ENCODE measurements at regions of chr12 and their contacts with region 1.

Region 1: DNA sequence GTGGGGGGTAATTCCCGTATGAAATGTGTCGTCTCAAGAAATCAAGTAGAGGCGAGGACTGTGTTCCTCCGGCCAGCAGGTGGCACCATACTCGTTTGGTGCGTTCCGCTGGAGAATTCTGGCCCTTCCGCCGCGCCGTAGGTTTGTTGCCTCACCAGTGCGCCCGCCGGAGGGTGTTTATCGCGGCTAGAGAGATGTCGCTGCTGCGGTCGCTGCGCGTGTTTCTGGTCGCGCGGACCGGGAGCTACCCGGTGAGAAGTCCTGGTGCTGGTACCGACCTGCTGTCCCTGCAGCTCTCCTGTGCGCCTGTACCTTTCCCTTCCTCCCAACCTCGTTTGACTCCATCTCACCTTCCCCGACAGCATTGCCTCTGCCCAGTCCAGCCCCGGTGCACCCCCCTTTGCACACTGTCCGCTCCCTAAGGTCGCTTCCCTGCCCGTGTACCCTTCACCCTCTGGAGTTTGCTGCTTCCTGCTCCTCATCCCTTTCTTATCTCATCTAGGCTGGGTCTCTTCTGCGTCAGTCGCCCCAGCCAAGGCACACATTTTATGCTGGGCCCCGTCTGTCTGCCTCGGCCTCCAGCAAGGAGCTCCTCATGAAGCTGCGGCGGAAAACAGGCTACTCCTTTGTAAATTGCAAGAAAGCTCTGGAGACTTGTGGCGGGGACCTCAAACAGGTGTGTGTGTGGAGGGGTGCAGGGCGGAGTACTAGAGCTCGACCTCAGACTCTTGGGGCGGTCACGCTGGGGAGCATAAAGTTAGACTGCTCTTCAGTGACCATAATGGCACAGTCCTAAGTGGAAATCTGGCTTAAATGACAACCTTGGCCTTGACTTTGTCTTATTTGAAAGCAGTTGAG is at the start of gene TSFM:
- DNase-seq: peak; percentile 90
- CTCF ChIP-seq: peak; percentile 94

Region 2: GRCh38 chr12:57700317-57700716 is 82.5 kb before region 1 on chr12:
- CTCF ChIA-PET with region 1: no interaction called
- POLR2A ChIA-PET with region 1: no interaction called
- DNase-seq: no peak
- CTCF ChIP-seq: no peak

Region 3: DNA sequence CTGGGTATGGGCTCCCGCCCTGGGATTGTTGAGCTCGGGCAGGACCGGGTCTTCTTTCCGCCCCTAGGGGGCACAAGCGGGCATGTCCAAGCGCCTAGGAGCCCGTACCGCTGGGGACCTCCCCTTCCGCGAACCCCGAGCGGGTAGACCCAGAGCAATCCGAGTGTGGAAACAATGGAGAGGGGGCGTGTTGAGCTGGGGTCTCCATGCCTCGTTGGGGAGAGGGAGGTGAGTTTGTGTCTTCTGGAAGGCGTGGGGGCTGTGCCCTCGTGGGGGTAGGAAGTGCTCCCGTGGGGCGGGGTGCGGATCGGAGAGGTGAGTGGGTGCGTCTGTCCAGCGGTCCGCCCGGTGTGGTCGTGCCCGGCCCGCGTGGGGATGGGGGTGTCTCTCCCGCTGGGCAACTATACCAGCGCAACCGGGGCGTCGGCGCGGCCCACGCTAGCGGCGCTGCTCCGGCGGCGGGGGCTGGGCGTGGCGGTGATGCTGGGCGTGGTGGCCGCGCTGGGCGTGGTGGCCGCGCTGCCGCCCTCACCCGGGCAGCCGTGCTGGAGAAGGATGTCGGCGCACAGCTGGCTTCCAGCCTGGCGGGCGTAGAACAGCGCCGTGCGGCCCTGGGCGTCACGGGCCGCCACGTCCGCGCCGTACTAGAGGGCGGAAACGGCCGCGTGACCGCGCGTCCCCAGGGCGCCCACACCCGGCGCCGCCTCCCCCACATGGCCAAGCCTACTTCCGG is 56.5 kb before region 1 on chr12:
- CTCF ChIA-PET with region 1: no interaction called
- POLR2A ChIA-PET with region 1: no interaction called
- DNase-seq: peak; percentile 16
- CTCF ChIP-seq: peak; percentile 39

Region 4: DNA sequence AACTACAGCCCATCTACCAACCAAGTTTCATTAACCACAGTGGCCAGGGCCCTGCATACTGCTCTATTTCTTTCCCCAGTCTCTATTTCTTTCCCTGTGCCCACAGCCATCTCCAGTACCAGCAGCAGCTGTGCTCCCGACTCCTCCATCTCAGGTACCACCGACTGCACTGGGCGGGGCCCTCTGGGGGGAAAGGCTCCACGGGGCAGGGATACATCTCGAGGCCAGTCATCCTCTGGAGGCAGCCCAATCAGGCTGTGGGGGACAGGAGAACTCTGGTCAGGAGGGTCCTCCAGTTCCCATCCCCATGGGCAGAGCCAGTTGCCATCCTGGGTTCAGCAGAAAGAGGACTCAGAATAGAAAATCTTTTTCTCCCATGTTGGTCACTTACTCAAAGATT is 33.8 kb before region 1 on chr12:
- CTCF ChIA-PET with region 1: no interaction called
- POLR2A ChIA-PET with region 1: no interaction called
- DNase-seq: no peak
- CTCF ChIP-seq: no peak

Region 5: DNA sequence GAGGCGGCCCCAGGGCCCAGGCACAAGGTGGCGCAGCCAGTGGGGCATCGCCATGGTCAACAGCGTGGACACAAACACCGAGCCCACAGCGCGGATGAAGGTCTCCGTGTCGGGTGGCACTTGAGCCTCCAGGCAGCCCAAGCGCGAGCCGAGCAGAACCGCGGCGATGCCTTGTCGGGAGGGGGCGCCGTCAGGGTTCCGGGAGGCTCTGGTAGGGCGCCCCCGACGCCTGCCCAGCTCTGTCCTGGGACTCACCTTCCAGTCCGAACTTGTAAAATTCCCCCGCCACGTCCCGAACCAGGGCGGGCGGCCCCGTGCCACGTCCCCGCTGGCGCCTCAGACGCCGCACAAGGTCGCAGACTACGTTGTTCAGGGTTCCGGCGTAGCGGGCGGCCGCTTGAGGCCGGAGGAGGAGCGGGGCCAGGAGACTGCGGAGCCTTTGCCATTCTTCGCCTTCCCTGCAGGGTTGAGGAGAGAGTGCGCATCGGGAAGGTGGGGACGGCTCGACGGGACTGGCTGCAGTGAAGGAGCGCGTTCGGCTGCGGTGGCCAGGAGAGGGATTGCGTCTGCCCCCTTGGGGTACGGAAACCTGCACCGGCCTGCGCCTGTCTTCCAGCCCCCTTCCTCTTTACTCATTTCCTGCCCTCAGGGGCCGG is 17.7 kb before region 1 on chr12:
- CTCF ChIA-PET with region 1: interaction called, 14 read pairs
- POLR2A ChIA-PET with region 1: no interaction called
- DNase-seq: peak; percentile 60
- CTCF ChIP-seq: peak; percentile 68

Region 6: GRCh38 chr12:57793920-57794319 is 11.1 kb after region 1 on chr12:
- CTCF ChIA-PET with region 1: interaction called, 85 read pairs
- POLR2A ChIA-PET with region 1: no interaction called
- DNase-seq: no peak
- CTCF ChIP-seq: no peak

Region 7: GRCh38 chr12:57836442-57837375 is 53.9 kb after region 1 on chr12:
- CTCF ChIA-PET with region 1: interaction called, 14 read pairs
- POLR2A ChIA-PET with region 1: no interaction called
- DNase-seq: peak; percentile 63
- CTCF ChIP-seq: no peak

Region 8: GRCh38 chr12:57993025-57993424 is 210.2 kb after region 1 on chr12:
- CTCF ChIA-PET with region 1: no interaction called
- POLR2A ChIA-PET with region 1: no interaction called
- DNase-seq: no peak
- CTCF ChIP-seq: no peak